ENCODE measurements at regions of chr9 and their contacts with region 1.

Region 1: GRCh38 chr9:92669890-92670708 is at the start of gene IPPK:
- DNase-seq: peak; percentile 98 to 99 (median 99)
- ATAC-seq: peak; percentile 92 to 97 (median 96)
- H3K4me3 ChIP-seq: peak within 1 kb of the TSS; percentile 93 to 97 (median 96)
- H3K27ac ChIP-seq: peak within 1 kb of the TSS; percentile 77 to 84 (median 82)
- H3K4me1 ChIP-seq: peaks cover 0 to 26% (median 9%) of the 10 kb centered on the region in 4 donors
- H3K27me3 ChIP-seq: no peaks in the 10 kb centered on the region
- CTCF ChIP-seq: no peak
- POLR2A ChIP-seq: peak; percentile 74
- total RNA-seq, gene IPPK: 2.4 to 4.9 (median 3.7) TPM

Region 2: GRCh38 chr9:92764988-92765936 is 95.2 kb after region 1 on chr9:
- intact Hi-C with region 1: loop called in 1 of 2 experiments (anchors 10 kb)
- DNase-seq: peak; percentile 98 to 99 (median 99)
- ATAC-seq: peak; percentile 93 to 97 (median 95)
- H3K4me3 ChIP-seq: peak overlapping the region; percentile 86 to 96 (median 94)
- H3K27ac ChIP-seq: peak overlapping the region; percentile 97 to 98 (median 98)
- H3K4me1 ChIP-seq: peaks cover 0 to 15% (median 3%) of the 10 kb centered on the region in 4 donors
- H3K27me3 ChIP-seq: no peaks in the 10 kb centered on the region
- CTCF ChIP-seq: peak; percentile 93 to 99 (median 97)
- POLR2A ChIP-seq: peak; percentile 97

Measured in right lobe of liver (tissue), 6 donors.